Heart right ventricle (tissue), 16 donors: ENCODE measurements at regions of chr18 and their contacts with region 1.

Region 1: DNA sequence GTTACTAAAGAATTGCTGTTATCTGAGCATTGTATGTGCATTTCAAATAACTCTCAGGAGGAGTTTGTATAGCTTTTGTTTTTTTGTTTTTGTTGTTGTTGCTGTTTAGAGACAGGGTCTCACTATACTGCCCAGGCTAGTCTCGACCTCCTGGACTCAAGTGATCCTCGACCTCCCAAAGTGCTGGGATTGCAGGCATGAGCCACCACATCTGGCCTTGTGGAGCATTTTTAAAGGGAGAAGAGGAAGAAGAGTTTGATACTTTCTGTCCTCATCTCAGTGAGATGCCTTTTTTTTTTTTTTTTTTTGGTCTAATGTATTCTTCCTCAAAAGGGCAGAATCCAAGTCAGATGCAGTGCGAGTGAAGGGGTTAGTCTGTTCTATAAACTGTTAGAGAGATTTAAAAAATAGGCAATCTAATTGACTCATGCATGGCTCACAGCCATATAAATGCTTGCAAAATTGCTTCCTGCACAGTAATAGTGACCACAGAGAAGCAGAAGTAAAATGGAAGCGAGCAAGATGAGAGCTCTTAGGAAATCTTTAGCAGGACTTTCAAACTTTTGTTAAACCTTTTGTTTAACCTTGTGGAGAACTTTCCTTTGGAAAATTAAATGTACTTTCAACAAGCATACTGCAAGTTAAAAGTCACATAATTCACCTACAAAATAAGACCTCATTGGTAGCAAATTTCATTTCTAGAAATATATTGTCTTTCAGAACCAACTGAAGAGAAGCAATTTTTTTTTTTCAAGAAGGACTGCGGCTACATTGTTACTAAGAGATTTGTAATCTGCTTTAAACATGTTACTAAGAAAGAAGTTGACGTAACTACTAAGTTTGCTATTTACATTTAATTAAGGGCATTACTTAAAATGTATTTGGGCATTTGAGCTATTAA is 52.3 kb upstream of the ROCK1 start:
- DNase-seq: peak in 1 of 2 donors; percentile 12
- ATAC-seq: peak; percentile 35 to 88 (median 74)
- H3K4me3 ChIP-seq: no peak overlapping the region
- H3K27ac ChIP-seq: peak overlapping the region in 4 of 10 donors; percentile 7 to 85 (median 38)
- H3K4me1 ChIP-seq: peaks cover 0 to 33% (median 0%) of the 10 kb centered on the region in 9 donors
- H3K27me3 ChIP-seq: no peaks in the 10 kb centered on the region
- CTCF ChIP-seq: no peak

Region 2: GRCh38 chr18:20971886-20972267 is 192.0 kb before region 1 on chr18:
- intact Hi-C with region 1: loop called in 1 of 10 experiments (anchors 10 kb)
- DNase-seq: no peak
- ATAC-seq: no peak
- H3K4me3 ChIP-seq: no peak overlapping the region
- H3K27ac ChIP-seq: no peak overlapping the region
- H3K4me1 ChIP-seq: no peaks in the 10 kb centered on the region
- H3K27me3 ChIP-seq: no peaks in the 10 kb centered on the region
- CTCF ChIP-seq: peak in 8 of 9 donors; percentile 19 to 56 (median 43)